Aorta (tissue), 5 donors: ENCODE measurements at regions of chr1 and their contacts with region 1.

Region 1: GRCh38 chr1:75838079-75838478 is 41.4 kb downstream of the MSH4 start:
- DNase-seq: no peak
- ATAC-seq: no peak
- H3K4me3 ChIP-seq: no peak overlapping the region
- H3K27ac ChIP-seq: no peak overlapping the region
- H3K4me1 ChIP-seq: no peaks in the 10 kb centered on the region
- H3K27me3 ChIP-seq: no peaks in the 10 kb centered on the region

Region 2: DNA sequence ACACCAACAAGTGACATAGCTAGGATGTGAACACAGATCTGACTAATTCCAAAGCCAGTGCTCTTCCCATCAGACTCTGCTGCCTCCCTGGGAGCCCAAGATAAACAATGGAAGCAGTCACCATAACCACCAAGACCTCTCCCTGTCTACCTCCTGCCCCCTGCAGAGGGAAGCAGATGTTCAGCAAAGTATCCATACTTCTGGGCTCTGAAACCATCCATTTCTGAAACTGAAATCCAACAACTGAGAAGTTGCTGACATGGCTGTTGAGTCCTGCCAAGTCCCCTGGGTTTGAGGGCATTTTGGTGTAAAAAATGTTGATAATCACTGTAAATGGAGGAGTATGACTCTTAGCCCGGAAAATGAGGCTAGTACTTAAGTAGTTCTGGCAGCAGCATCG is 1003.0 kb before region 1 on chr1:
- intact Hi-C with region 1: loop called in 1 of 2 experiments (anchors 10 kb)
- DNase-seq: no peak
- ATAC-seq: no peak
- H3K4me3 ChIP-seq: no peak overlapping the region
- H3K27ac ChIP-seq: no peak overlapping the region
- H3K4me1 ChIP-seq: no peaks in the 10 kb centered on the region
- H3K27me3 ChIP-seq: no peaks in the 10 kb centered on the region

Region 3: GRCh38 chr1:75725861-75726361 is 112.2 kb before region 1 on chr1:
- intact Hi-C with region 1: no loop called
- DNase-seq: no peak
- ATAC-seq: no peak
- H3K4me3 ChIP-seq: peak overlapping the region in 1 of 2 donors; percentile 56
- H3K27ac ChIP-seq: peak overlapping the region in 1 of 2 donors; percentile 19
- H3K4me1 ChIP-seq: peaks cover 0 to 2% of the 10 kb centered on the region in 2 donors
- H3K27me3 ChIP-seq: no peaks in the 10 kb centered on the region

Region 4: DNA sequence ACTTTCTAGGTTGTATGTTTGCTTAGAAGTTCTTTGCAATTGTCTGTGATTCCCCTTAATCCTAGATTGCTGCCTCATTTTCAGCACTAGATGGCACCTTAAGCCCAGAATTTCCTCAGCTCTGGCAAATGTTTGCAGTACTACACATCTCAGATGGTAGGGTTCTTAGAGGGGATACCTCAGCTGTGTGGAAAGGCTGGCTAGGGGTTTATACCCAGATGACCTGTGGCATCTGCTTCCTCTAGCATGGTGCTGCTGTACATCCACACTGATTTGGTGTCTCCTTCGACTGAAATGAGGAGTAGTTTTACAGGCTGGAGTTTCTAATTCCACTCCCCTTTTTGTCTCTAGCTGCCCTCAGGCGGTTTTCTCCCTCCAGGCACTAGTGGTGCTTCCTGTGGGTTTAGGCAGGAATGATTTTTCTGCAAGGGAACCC is 70.7 kb after region 1 on chr1:
- intact Hi-C with region 1: no loop called
- DNase-seq: no peak
- ATAC-seq: no peak
- H3K4me3 ChIP-seq: no peak overlapping the region
- H3K27ac ChIP-seq: no peak overlapping the region
- H3K4me1 ChIP-seq: no peaks in the 10 kb centered on the region
- H3K27me3 ChIP-seq: no peaks in the 10 kb centered on the region

Region 5: DNA sequence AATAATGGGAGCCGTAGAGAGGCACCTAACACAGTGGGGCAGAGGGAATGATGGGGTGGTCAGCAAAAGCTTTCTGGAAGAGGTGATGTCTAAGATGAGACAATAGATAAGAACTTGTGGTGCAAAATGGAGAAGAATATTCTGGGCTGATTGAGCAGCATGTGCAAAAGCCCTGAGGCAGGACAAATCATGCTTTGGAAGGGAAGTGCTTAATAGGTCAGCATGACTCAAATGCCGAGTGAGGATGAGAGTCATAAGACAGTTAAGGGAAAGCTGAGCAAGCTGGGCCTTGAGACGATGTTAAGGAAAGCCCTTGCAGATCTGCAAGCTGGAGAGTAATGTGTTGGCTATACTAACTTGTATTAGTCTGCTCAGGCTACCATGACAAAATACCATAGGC is 131.5 kb after region 1 on chr1:
- intact Hi-C with region 1: no loop called
- DNase-seq: no peak
- ATAC-seq: no peak
- H3K4me3 ChIP-seq: no peak overlapping the region
- H3K27ac ChIP-seq: no peak overlapping the region
- H3K4me1 ChIP-seq: no peaks in the 10 kb centered on the region
- H3K27me3 ChIP-seq: no peaks in the 10 kb centered on the region